PC-3 (cell line): ENCODE measurements at regions of chr1 and their contacts with region 1.

Region 1: DNA sequence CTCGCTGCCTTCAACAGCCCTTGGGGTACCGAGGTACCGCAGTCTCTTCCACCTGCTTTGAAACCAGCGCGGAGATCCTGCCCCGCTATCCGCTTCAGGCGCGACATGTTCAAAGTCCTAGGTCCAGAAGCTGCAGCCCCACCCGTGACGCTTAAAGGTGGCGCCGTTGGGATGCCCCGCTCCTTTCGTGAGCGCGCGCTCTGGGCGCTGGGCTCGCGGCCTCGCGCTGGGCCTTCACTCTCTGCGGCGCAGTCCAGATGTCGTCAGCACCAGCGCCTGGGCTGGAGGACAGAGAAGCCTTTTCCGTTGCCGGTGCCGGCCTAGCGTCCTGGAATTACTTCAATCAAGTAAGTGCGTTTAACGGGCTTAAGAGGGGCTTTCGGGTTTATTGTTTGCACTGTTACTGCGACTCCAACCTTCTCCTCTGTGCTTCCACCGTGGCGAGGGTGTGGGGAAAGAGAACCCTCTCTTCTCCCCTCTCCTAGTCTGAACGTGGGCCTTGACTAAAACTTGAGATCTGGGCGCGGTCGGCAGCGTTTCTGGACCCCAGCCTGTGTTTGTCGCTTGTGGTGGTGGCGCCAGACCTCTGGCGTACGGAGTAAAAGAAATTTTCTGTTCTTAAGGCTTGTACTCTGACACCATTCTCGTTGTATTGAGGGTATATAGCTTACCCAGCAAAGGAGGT is at the start of gene LRRC40:
- DNase-seq: peak; percentile 98
- ATAC-seq: peak; percentile 85
- H3K4me3 ChIP-seq: peak within 1 kb of the TSS; percentile 85
- H3K27ac ChIP-seq: peak within 1 kb of the TSS; percentile 75
- H3K4me1 ChIP-seq: peaks cover 12% of the 10 kb centered on the region
- H3K27me3 ChIP-seq: no peaks in the 10 kb centered on the region
- CTCF ChIP-seq: 0 out of 2 replicates have a peak, but pooled peaks have one; percentile 25
- total RNA-seq, gene LRRC40: 17.9 and 18.4 TPM in 2 replicates

Region 2: GRCh38 chr1:70117046-70117445 is 88.5 kb before region 1 on chr1:
- CTCF ChIA-PET with region 1: no interaction called
- POLR2A ChIA-PET with region 1: no interaction called
- intact Hi-C with region 1: no loop called
- DNase-seq: no peak
- ATAC-seq: no peak
- H3K4me3 ChIP-seq: no peak overlapping the region
- H3K27ac ChIP-seq: no peak overlapping the region
- H3K4me1 ChIP-seq: no peaks in the 10 kb centered on the region
- H3K27me3 ChIP-seq: peaks cover 48% of the 10 kb centered on the region
- CTCF ChIP-seq: no peak

Region 3: DNA sequence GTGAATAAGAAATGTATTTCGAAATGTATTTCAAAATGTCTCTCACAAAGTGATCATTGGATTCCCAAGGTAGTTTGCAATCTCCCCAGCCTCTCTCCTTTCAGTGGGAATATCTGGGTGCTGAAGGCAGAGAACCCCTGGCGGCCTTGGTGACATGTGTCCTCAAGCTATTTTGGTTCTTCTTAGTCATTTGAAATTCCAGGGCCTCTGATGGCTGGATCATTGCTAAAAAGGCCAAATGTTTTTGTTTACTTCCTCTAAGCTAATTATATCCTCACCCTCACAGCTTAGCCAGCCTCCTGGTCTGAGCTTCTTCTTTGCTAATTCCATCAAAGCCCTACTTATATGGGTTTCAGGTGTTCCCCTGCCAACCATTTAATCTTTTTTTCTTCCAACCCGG is 71.4 kb before region 1 on chr1:
- CTCF ChIA-PET with region 1: no interaction called
- POLR2A ChIA-PET with region 1: no interaction called
- intact Hi-C with region 1: loop called (anchors 2 kb)
- DNase-seq: peak; percentile 7
- ATAC-seq: no peak
- H3K4me3 ChIP-seq: no peak overlapping the region
- H3K27ac ChIP-seq: no peak overlapping the region
- H3K4me1 ChIP-seq: no peaks in the 10 kb centered on the region
- H3K27me3 ChIP-seq: no peaks in the 10 kb centered on the region
- CTCF ChIP-seq: no peak

Region 4: DNA sequence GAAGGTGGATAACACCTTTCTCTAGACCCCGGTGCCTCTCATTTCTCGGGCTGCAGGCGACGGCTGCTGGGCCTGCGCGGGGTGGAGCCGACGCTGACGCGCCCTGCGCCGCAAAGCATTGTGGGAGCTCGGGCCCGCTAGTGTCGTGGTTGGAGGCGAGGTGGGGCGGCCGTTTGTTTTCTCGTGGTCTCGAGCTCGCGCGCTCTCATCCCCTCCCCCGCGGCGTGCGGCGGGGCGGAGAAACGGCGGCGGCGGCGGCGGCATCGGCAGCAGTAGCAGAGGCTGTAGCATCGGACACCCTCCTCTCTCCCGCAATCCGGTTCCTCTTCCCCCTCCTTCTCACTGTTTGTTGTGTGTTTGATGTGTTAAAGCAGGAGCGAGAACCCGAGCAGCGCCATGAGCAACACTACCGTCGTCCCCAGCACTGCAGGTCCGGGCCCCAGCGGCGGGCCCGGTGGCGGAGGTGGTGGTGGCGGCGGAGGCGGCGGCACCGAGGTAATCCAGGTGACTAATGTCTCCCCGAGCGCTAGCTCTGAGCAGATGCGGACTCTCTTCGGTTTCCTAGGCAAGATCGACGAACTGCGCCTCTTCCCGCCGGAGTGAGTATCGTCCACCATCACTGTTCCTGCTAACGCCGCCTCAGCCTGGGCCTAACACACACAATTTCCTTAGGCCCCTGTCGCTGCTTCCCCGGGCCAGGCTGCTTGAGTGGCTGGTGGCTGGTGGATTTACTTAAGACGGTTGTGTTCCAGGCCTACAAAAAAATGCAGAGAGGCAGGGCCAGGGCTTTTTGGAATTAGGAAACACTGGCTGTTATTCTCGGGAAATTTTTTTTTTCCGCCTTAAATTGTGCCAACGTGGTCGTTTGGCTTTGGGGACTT is 15.9 kb after region 1 on chr1 and contains the start of gene SRSF11:
- CTCF ChIA-PET with region 1: interaction called, 8 read pairs
- POLR2A ChIA-PET with region 1: interaction called, 13 read pairs
- intact Hi-C with region 1: loop called (anchors 2 kb)
- DNase-seq: peak; percentile 95
- ATAC-seq: peak; percentile 97
- H3K4me3 ChIP-seq: peak within 1 kb of the TSS; percentile 99
- H3K27ac ChIP-seq: peak within 1 kb of the TSS; percentile 86
- H3K4me1 ChIP-seq: peaks cover 20% of the 10 kb centered on the region
- H3K27me3 ChIP-seq: no peaks in the 10 kb centered on the region
- CTCF ChIP-seq: no peak
- total RNA-seq, gene SRSF11: 98.7 and 112 TPM in 2 replicates

Region 5: DNA sequence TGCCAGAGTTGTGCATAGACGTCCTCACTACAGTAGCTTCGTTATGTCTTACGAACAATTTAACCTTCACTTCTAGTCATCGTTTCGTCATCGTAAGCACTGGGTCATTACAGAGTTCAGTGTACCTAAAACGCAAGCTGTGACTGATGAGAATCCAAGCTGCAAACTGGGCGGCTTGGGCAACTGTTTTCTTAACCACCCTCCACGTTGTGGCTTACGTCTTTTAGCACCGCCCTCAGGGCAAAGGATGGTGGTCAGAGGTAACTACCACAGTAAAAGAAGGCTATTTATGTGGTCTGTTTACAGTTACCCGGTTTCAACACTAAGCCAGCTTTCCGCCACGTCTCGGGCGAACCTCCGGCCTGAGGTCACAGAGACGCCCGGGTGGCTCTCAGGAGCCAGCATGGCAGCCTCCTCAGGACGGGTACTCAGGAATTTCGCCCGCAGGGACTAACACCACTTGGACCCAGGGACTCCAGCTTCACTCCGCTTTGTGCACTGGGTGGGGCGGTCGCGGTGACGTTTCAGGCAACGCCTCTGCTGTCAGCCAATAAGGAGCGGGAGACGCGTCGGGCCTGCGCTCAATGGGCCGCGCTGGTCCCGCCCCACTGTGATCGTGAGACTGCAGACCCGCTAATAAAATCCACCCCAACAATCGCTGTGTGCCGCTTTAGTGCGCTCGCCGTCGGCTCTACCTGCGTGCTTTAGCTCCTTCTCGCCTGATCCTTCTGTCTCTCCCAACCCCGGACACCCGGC is 205.2 kb after region 1 on chr1 and contains the start of gene CTH:
- CTCF ChIA-PET with region 1: no interaction called
- POLR2A ChIA-PET with region 1: no interaction called
- intact Hi-C with region 1: loop called (anchors 5 kb)
- DNase-seq: peak; percentile 98
- ATAC-seq: peak; percentile 95
- H3K4me3 ChIP-seq: peak within 1 kb of the TSS; percentile 88
- H3K27ac ChIP-seq: peak within 1 kb of the TSS; percentile 73
- H3K4me1 ChIP-seq: peaks cover 11% of the 10 kb centered on the region; the same call in 1 of the 2 replicates
- H3K27me3 ChIP-seq: no peaks in the 10 kb centered on the region
- CTCF ChIP-seq: no peak
- total RNA-seq, gene CTH: 8.5 and 13.2 TPM in 2 replicates

Region 6: GRCh38 chr1:71080739-71081696 is 875.4 kb after region 1 on chr1 and contains the start of gene ZRANB2:
- CTCF ChIA-PET with region 1: no interaction called
- POLR2A ChIA-PET with region 1: no interaction called
- intact Hi-C with region 1: loop called (anchors 1 kb)
- DNase-seq: peak; percentile 97
- ATAC-seq: peak; percentile 92
- H3K4me3 ChIP-seq: peak within 1 kb of the TSS; percentile 92
- H3K27ac ChIP-seq: peak within 1 kb of the TSS; percentile 86
- H3K4me1 ChIP-seq: peaks cover 52% of the 10 kb centered on the region
- H3K27me3 ChIP-seq: no peaks in the 10 kb centered on the region
- CTCF ChIP-seq: peak; percentile 81
- total RNA-seq, gene ZRANB2: 38.7 and 45.5 TPM in 2 replicates